ENCODE measurements at regions of chr6 and their contacts with region 1.

Region 1: GRCh38 chr6:133568970-133569889 is 319.7 kb upstream of the TCF21 start:
- DNase-seq: no peak
- H3K4me3 Mint-ChIP-seq: peak overlapping the region; percentile 55
- H3K27ac Mint-ChIP-seq: no peak overlapping the region
- H3K4me1 Mint-ChIP-seq: peaks cover 6% of the 10 kb centered on the region
- H3K27me3 Mint-ChIP-seq: peaks cover 16% of the 10 kb centered on the region

Region 2: DNA sequence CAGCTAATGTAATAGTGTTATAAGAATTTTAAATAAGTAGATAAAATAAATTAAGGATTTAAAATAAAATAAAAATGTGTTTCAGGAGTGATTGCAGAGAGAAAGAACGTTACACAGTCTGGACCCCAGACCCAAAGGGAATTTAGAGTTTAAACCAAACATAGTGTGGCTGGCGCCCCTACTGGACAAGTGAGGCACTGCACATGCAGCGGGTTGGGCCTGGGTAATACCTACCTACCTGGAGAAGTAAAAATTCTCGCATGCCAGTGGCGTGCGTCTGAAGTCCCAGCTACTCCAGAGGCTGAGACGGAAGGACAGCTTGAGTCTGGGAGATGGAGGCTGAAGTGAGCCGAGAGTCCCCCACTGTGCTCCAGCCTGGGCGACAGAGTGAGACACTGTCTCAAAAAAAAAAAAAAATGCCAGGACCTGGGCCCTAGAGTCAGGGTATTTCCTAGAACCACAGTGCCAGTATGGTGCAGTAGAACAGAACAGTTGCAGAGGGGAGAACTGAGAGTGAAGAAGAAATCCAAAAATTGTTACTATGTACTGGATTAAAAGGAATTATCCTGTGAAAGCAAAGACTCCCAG is 248.3 kb after region 1 on chr6:
- intact Hi-C with region 1: loop called (anchors 5 kb)
- DNase-seq: no peak
- H3K4me3 Mint-ChIP-seq: no peak overlapping the region
- H3K27ac Mint-ChIP-seq: no peak overlapping the region
- H3K4me1 Mint-ChIP-seq: no peaks in the 10 kb centered on the region
- H3K27me3 Mint-ChIP-seq: no peaks in the 10 kb centered on the region

Region 3: GRCh38 chr6:133916650-133917151 is 347.5 kb after region 1 on chr6:
- intact Hi-C with region 1: loop called (anchors 1 kb)
- DNase-seq: peak; percentile 56
- H3K4me3 Mint-ChIP-seq: no peak overlapping the region
- H3K27ac Mint-ChIP-seq: no peak overlapping the region
- H3K4me1 Mint-ChIP-seq: no peaks in the 10 kb centered on the region
- H3K27me3 Mint-ChIP-seq: peaks cover 29% of the 10 kb centered on the region

Region 4: DNA sequence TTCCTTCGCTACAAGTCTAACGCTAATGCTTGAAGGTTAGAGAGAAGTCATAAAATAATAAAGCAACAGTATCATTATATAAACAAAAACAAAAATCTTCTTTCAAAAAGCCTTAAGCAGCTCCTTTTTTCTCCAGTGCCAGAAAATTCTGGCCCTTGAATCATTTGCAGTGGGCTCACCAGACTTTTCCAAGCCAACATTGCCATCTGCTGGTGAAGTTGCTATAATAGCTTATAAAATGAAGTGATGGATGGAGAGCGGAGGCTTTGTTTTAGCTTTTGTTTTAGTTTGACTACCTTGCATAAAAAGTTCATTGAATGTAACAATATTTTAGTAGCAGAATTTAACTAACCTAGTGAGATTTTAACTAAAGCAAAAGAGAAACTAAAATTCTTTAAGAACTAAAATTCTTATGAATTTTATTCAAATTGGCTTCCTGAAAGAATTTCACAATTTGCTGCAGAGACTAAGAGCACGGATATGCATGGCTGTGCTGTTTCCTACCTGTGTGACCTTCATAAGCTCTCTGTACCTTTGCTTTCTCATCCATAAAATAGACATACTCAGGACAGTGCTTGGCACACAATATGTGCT is 528.0 kb after region 1 on chr6:
- intact Hi-C with region 1: loop called (anchors 1 kb)
- DNase-seq: peak; percentile 38
- H3K4me3 Mint-ChIP-seq: no peak overlapping the region
- H3K27ac Mint-ChIP-seq: no peak overlapping the region
- H3K4me1 Mint-ChIP-seq: peaks cover 6% of the 10 kb centered on the region
- H3K27me3 Mint-ChIP-seq: peaks cover 22% of the 10 kb centered on the region